ENCODE measurements at regions of chr3 and their contacts with region 1.

Region 1: DNA sequence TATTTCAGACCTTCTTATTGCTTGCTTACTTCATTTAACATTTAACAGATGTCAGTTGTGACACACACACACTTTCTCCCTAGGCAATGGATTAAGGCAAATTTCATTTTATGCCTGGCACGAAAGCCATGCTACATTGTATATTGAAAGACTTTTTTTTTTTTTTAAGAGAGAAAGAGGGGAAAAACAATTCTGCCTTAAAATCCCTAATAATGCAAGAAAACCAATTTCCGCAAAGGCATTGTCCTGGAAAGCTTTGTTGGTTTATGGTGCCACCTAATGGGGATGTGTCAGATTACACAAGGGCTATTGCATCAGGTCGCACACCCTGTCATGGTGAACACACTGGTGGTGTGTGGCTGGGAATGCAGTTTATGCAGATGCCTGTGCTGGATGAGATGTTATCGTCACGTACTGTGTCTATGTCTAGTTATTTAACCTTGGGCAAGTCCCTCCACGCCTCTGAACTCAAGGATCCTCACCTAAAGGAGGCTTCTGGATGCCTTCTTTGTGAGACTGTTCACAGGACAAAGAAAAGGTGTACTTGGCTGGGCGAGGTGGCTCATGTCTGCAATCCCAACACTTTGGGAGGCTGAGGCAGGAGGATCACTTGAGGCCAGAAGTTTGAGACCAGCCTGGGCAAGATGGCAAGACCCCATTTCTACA is 37.3 kb upstream of the RFTN1 start:
- DNase-seq: peak; percentile 92
- H3K4me3 ChIP-seq: no peak overlapping the region
- H3K27ac ChIP-seq: no peak overlapping the region
- H3K4me1 ChIP-seq: peaks cover 17% of the 10 kb centered on the region
- CTCF ChIP-seq: peak; percentile 97

Region 2: GRCh38 chr3:16264708-16265454 is 285.9 kb before region 1 on chr3 and contains the starts of genes DPH3 and OXNAD1:
- CTCF ChIA-PET with region 1: no interaction called
- POLR2A ChIA-PET with region 1: interaction called, 3 read pairs
- intact Hi-C with region 1: loop called (anchors 1 kb)
- DNase-seq: peak; percentile 100
- H3K4me3 ChIP-seq: peak within 1 kb of the TSS; percentile 91
- H3K27ac ChIP-seq: peak within 1 kb of the TSS; percentile 36
- H3K4me1 ChIP-seq: peaks cover 35% of the 10 kb centered on the region
- CTCF ChIP-seq: no peak
- total RNA-seq, gene DPH3: 4.8 and 7.3 TPM in 2 replicates
- total RNA-seq, gene OXNAD1: 16.6 and 18.7 TPM in 2 replicates

Region 3: GRCh38 chr3:16290007-16290826 is 260.6 kb before region 1 on chr3:
- CTCF ChIA-PET with region 1: interaction called, 6 read pairs
- POLR2A ChIA-PET with region 1: interaction called, 6 read pairs
- intact Hi-C with region 1: loop called (anchors 1 kb)
- DNase-seq: peak; percentile 62
- H3K4me3 ChIP-seq: no peak overlapping the region
- H3K27ac ChIP-seq: peak overlapping the region; percentile 34
- H3K4me1 ChIP-seq: peaks cover 22% of the 10 kb centered on the region
- CTCF ChIP-seq: peak; percentile 100

Region 4: DNA sequence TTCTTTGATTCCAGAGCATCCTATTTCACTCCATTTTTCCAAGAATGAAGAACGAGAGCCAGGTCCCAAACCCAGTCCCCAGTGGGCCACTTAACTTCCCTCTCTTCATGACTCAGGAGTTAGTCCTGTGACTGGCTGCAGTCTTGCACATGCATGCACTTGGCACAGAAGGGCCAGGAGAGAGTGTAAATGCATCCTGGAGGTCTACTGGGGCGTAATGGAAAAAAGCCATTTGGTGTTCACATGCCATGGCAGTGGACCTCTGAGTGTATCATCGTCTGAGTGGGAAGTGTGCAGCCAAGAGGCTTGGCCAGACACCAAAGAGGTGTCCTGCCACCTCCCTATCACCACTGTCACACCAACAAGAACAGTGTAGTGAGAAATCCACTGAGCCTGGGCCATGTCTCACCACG is 22.2 kb before region 1 on chr3:
- CTCF ChIA-PET with region 1: no interaction called
- POLR2A ChIA-PET with region 1: no interaction called
- intact Hi-C with region 1: no loop called
- DNase-seq: no peak
- H3K4me3 ChIP-seq: no peak overlapping the region
- H3K27ac ChIP-seq: no peak overlapping the region
- H3K4me1 ChIP-seq: peaks cover 19% of the 10 kb centered on the region
- CTCF ChIP-seq: no peak